AG04449 (cell line): ENCODE measurements at regions of chr1 and their contacts with region 1.

Region 1: GRCh38 chr1:20493839-20494608 is 8.0 kb upstream of the CAMK2N1 start:
- DNase-seq: peak; percentile 42
- H3K4me3 ChIP-seq: no peak overlapping the region
- CTCF ChIP-seq: peak; percentile 97

Region 2: GRCh38 chr1:19974822-19975416 is 519.1 kb before region 1 on chr1:
- CTCF ChIA-PET with region 1: interaction called, 17 read pairs
- POLR2A ChIA-PET with region 1: no interaction called
- DNase-seq: peak; percentile 28
- H3K4me3 ChIP-seq: no peak overlapping the region
- CTCF ChIP-seq: peak; percentile 91

Region 3: DNA sequence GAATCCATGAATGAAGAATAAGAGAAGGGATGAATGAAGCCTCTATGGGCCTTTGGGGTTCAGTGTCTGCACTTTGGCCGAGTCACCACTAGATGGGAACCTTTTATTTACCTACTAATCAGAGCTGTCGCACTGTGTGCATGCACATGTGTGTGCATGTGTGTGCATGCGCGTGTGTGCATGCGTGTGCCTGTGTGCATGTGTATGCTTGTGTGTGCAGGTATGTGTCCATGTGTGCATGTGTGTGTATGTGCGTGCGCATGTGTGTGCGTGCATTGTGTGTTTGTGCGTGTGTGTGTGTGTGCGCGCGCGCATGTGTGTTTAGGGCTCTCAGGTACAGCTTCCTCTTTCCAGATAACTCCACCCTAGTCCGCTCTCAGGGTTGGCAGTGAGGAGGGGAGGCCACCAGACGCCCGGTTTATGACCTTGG is 328.5 kb before region 1 on chr1:
- CTCF ChIA-PET with region 1: interaction called, 11 read pairs
- POLR2A ChIA-PET with region 1: no interaction called
- DNase-seq: no peak
- H3K4me3 ChIP-seq: no peak overlapping the region
- CTCF ChIP-seq: peak; percentile 10

Region 4: DNA sequence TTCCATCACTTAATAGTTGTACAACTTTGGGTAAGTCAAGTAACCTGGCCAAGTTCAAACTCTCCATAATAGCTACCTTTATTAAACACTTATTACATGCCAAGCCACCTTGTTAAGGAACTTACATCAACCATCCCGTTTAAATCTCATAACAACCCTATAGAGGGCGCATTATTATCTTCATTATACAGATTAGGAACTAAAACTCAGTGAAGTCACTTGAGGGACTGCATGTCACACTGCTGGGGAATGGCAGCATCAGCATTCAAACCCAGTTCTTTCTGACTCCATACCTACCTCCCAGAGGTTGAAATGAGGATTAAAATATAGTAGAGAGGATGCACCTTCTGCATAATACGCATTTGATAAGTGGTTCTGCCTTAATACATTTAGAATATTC is 260.6 kb before region 1 on chr1:
- CTCF ChIA-PET with region 1: interaction called, 35 read pairs
- POLR2A ChIA-PET with region 1: interaction called, 3 read pairs
- DNase-seq: no peak
- H3K4me3 ChIP-seq: no peak overlapping the region
- CTCF ChIP-seq: peak; percentile 18

Region 5: DNA sequence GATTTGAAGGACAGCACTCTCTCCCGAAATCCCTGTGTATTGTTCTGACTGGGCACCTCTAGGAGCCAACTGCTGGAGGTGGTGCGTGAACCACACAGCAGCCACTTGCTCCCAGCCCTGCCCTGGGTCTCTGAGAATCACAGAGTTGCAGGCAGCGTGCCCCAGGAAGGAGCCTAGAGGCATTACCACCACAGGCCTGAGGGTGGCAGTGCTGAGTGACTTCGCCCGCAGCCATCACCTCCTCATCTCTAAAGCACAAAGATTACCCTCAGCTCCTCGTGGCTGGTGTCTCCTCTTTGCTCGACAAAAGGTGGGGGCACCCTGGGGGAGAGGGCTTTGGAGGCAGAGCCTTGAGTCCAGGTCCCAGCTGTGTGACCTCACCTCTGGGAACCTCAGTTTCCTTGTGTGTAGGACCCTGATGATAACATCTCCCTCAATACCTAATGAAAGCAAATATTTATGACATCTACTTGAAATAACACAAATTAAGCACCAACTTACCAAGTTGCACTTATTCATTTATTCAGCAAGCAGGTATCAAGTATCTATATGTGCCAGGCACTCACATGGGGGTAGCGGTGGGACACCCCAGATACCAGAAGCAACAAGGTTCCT is 117.0 kb before region 1 on chr1:
- CTCF ChIA-PET with region 1: interaction called, 107 read pairs
- POLR2A ChIA-PET with region 1: no interaction called
- DNase-seq: no peak
- H3K4me3 ChIP-seq: no peak overlapping the region
- CTCF ChIP-seq: peak; percentile 90